ENCODE measurements at regions of chr3 and their contacts with region 1.

Region 1: DNA sequence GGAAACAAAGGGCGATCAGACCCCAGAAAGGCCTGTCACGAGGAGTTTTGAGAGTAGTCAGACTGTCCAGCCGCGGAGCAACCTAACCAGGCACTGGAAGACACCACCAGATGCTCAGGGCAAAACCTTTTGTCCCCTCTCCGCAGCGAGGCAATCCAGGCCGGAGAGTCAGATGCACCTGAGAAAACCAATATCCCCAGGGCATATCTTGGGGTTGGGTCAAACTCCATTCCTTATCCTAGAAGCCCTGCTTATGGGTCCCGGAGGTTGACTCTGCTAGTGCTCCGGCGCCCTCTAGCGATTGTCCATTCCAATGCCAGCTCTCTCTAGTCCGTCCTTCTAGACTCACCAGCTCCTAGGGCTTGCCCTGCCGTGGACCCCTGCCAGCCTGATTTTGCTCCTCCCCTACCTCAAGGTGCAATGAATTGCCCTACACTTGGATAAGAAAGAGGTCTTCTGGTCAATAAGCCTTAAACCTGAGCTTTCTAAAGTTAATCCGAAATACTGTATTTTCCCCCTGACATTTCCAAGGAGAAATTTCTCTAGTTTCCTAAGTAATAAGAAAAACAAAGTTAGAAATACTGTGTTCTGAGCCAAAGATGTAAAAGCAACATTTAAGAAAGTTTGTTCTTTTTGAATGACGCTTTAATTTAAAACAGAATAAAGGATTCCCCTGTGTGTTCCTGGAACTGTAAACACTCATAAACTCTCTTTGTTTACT is 5.5 kb downstream of the CPNE4 start:
- DNase-seq: peak; percentile 98
- H3K4me3 Mint-ChIP-seq: peak overlapping the region; percentile 27
- H3K27ac Mint-ChIP-seq: no peak overlapping the region
- H3K4me1 Mint-ChIP-seq: peaks cover 52% of the 10 kb centered on the region
- H3K27me3 Mint-ChIP-seq: no peaks in the 10 kb centered on the region
- CTCF ChIP-seq: peak; percentile 97

Region 2: DNA sequence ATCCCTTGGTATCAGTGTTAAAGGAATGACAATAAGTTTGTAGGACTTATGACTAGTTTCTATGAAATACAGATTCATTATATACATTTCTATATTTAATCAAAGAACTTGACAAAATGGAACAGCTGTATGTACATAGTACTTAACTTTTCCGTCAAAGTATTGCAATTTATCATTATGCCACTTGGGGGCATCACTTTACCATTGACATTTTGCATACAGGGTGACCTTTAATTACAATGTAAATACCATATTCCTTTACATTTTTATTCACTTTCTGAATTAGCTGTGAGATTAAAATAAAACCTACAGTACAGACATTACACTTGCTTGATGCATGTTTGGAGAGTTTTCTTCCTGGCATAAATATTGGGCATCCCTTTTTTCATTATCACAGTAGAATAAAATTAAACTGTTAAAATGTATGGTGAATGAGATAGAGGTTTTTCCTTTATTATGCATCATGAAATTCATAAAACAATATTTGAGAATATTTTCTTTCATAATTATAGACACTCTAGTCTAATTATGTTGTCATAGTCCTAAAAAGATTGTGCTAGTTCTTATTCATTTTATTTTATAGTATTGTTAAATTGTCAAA is 995.8 kb before region 1 on chr3:
- CTCF ChIA-PET with region 1: interaction called, 9 read pairs
- intact Hi-C with region 1: loop called (anchors 1 kb)
- DNase-seq: peak; percentile 65
- H3K4me3 Mint-ChIP-seq: no peak overlapping the region
- H3K27ac Mint-ChIP-seq: no peak overlapping the region
- H3K4me1 Mint-ChIP-seq: no peaks in the 10 kb centered on the region
- H3K27me3 Mint-ChIP-seq: no peaks in the 10 kb centered on the region
- CTCF ChIP-seq: peak; percentile 67

Region 3: DNA sequence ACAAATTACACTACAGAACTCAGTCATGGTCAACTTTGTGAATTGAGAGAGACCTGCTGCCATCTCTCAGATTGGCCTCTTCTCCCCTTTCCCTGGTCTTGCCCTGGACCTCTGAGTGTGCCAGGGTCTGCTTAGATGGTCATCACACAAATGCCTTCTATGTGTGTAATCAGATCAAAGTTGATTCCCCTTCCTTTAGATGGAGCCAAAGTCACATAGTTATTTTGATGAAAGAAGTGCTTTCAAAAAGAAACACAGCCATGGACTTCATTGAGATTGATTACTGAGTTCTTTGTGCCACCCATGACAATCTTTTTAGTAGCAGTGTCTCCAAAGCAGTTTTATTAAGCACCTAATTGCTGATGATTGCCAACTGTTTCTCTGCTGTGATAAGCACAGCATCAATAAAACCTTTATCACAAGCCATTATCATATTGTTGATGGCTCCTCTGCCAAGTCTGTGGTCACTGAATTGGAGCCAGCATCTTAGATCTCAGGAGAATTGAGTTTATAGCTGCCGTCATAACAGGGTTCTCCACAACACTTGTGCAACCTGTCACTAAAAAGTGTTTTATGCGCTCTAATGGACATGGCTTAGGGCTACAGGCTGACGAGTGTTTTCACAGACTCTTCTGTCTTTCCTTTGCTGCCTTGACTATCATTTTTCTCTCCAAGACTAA is 797.5 kb before region 1 on chr3:
- CTCF ChIA-PET with region 1: interaction called, 3 read pairs
- intact Hi-C with region 1: loop called (anchors 10 kb)
- DNase-seq: no peak
- H3K4me3 Mint-ChIP-seq: no peak overlapping the region
- H3K27ac Mint-ChIP-seq: no peak overlapping the region
- H3K4me1 Mint-ChIP-seq: no peaks in the 10 kb centered on the region
- H3K27me3 Mint-ChIP-seq: no peaks in the 10 kb centered on the region
- CTCF ChIP-seq: no peak

Region 4: DNA sequence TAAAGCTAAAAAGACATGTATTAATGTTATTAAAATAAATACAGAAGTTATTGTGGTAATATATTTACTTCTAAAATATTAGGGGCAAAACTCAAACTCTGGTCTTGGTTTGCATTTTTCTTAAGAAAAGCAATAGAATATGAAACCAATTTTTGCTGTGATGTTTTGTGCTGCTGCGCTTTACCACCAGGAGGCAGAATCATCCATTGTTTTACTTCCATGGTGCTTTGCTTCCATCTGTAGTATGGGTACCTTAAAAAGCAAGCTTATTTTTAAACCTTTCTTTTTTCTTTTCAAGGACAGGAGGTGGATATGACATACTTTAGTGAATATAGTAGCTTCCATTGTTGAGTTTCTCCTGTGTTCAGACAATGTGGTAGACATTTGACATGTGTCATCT is 480.0 kb before region 1 on chr3:
- CTCF ChIA-PET with region 1: interaction called, 8 read pairs
- intact Hi-C with region 1: loop called (anchors 1 kb)
- DNase-seq: peak; percentile 44
- H3K4me3 Mint-ChIP-seq: no peak overlapping the region
- H3K27ac Mint-ChIP-seq: no peak overlapping the region
- H3K4me1 Mint-ChIP-seq: peaks cover 4% of the 10 kb centered on the region
- H3K27me3 Mint-ChIP-seq: no peaks in the 10 kb centered on the region
- CTCF ChIP-seq: peak; percentile 67

Region 5: DNA sequence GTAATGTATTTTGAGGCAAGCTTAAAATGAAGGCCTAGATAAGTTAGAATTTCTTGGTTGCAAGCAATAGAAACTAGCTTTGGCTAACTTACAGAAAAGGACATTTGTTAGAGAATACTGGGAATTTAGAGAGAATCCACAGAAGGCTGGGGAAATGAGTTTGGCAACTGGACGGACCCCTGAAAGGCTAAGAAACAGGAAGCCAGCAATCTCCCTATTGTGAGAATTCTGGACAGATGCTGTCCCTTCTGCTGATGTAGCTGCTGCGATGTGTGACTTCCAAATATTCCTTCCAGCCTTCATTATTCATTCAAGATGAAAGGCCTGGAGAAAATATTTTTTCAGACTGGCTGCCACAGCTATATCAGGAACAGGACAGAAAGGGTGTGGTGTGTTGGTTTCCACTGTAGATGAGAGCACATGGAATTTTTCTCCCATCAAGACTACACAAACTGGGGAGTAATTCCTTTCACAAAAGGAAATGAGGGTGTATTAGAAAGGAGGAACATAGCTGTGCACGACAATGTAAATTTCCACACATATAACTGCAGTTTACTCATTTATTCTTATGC is 208.1 kb before region 1 on chr3:
- CTCF ChIA-PET with region 1: no interaction called
- intact Hi-C with region 1: no loop called
- DNase-seq: no peak
- H3K4me3 Mint-ChIP-seq: no peak overlapping the region
- H3K27ac Mint-ChIP-seq: no peak overlapping the region
- H3K4me1 Mint-ChIP-seq: no peaks in the 10 kb centered on the region
- H3K27me3 Mint-ChIP-seq: no peaks in the 10 kb centered on the region
- CTCF ChIP-seq: no peak

Region 6: GRCh38 chr3:131892331-131892730 is 137.0 kb before region 1 on chr3:
- CTCF ChIA-PET with region 1: interaction called, 6 read pairs
- intact Hi-C with region 1: loop called (anchors 1 kb)
- DNase-seq: no peak
- H3K4me3 Mint-ChIP-seq: no peak overlapping the region
- H3K27ac Mint-ChIP-seq: no peak overlapping the region
- H3K4me1 Mint-ChIP-seq: no peaks in the 10 kb centered on the region
- H3K27me3 Mint-ChIP-seq: no peaks in the 10 kb centered on the region
- CTCF ChIP-seq: peak; percentile 25

Region 7: DNA sequence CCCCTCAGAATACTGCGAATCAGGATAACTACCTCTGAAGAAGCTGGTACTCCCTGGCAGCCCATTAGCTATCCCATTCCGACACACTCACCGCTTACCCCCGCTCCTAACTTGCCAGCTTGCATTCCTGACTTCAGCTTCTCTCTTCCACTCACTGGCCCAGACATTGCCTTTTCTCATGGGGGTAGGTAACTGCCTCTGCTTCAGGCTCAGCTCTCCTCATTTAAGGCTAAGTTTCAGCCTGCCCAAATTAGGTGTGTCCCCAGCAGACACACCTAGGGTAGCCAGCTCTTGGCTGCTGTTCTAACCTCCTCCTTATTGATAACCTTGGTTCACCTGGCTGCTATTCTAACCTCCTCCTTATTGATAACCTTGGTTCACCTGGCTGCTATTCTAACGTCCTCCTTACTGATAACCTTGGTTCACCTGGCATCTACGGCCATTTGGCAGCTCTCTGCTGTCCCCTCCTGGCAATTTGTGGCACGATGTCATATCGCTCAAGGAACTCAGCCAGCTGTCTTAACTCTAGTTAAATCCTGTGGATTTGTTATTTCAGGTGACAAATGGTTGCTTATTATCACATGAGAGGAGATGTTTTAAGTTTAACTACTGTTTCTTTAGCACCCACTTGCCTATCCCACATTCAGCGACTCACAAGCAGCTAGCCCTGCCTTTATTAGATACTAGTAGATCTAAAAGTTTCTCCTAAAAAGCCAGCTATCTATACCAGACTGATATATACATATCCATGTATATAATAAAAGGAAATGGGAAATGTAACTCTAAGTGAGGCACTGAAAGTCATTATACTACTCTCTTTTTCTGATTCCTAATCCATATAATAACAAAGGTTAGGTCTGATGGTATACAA is 181.4 kb after region 1 on chr3:
- CTCF ChIA-PET with region 1: interaction called, 23 read pairs
- intact Hi-C with region 1: loop called (anchors 1 kb)
- DNase-seq: peak; percentile 84
- H3K4me3 Mint-ChIP-seq: no peak overlapping the region
- H3K27ac Mint-ChIP-seq: no peak overlapping the region
- H3K4me1 Mint-ChIP-seq: peaks cover 12% of the 10 kb centered on the region
- H3K27me3 Mint-ChIP-seq: no peaks in the 10 kb centered on the region
- CTCF ChIP-seq: peak; percentile 98

Measured in Calu3 (cell line).